ENCODE measurements at regions of chr6 and their contacts with region 1.

Region 1: DNA sequence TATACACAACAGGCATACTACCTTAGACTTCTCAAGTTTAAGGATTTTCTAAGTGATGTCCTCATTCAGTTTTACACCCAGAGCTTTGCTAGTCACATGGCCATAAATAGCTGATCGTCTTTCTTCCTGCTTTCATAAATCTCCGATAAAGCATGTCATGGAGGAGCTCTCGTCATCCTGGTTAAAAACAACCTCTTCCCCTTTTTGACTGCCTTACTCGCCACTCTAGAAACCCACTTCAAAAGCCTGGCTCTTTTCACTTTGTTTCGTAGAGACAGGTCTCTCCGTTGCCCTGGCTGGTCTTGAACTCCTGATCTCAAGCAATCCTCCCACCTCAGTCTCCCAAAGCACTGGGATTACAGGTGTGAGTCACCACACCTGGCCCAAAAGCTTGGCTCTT is 67.0 kb upstream of the SMIM29 start:
- DNase-seq: peak in 2 of 9 experiments; percentile 4 to 33
- ATAC-seq: no peak
- H3K4me3 ChIP-seq: no peak overlapping the region
- H3K4me3 Mint-ChIP-seq: peak overlapping the region; percentile 52
- H3K27ac ChIP-seq: no peak overlapping the region
- H3K27ac Mint-ChIP-seq: peak overlapping the region; percentile 61
- H3K4me1 ChIP-seq: peaks cover 10% of the 10 kb centered on the region
- H3K4me1 Mint-ChIP-seq: peaks cover 42% of the 10 kb centered on the region
- H3K27me3 ChIP-seq: no peaks in the 10 kb centered on the region
- H3K27me3 Mint-ChIP-seq: no peaks in the 10 kb centered on the region
- CTCF ChIP-seq: no peak

Region 2: GRCh38 chr6:34331371-34332050 is 15.7 kb after region 1 on chr6:
- CTCF ChIA-PET with region 1: no interaction called
- POLR2A ChIA-PET with region 1: no interaction called
- intact Hi-C with region 1: no loop called
- DNase-seq: no peak
- ATAC-seq: no peak
- H3K4me3 ChIP-seq: no peak overlapping the region
- H3K4me3 Mint-ChIP-seq: no peak overlapping the region
- H3K27ac ChIP-seq: no peak overlapping the region
- H3K27ac Mint-ChIP-seq: no peak overlapping the region
- H3K4me1 ChIP-seq: no peaks in the 10 kb centered on the region
- H3K4me1 Mint-ChIP-seq: peaks cover 7% of the 10 kb centered on the region
- H3K27me3 ChIP-seq: no peaks in the 10 kb centered on the region
- H3K27me3 Mint-ChIP-seq: no peaks in the 10 kb centered on the region
- CTCF ChIP-seq: no peak

Region 3: DNA sequence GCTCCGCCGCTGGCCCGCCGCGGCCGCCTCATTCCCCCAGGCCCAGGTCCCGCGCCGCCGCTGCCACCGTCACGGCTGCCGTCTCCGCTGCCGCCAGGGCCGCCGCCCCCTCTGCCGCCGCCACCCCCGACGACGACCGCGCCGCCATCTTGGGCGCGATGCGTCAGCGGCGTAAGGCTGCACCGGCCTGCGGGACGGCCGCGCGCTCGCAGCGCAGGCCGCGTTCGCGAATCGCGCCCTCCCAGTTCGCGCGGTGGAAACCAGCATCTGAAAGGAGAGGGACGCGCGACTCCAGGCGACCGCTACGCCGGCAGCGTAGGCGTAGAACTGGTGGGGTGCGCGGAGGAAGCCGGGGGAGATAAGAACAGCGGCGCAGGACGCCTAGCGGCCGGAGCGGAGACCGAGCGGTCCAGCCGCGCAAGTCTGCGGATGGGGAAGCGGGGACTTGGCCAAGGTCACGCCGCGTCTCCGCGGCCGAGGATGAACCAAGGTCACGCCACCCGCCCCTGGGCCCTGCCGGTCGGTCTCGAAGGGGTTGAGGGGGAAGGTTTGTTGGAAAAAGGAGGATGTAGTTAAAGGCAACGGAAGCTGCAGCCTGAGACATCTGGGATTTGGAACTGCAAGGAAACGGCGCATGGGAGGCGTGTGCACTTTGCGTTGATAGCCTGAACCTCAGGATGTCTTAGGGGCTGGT is 76.9 kb after region 1 on chr6 and contains the start of gene NUDT3:
- CTCF ChIA-PET with region 1: no interaction called
- POLR2A ChIA-PET with region 1: no interaction called
- intact Hi-C with region 1: loop called in 1 of 2 experiments (anchors 5 kb)
- DNase-seq: peak; percentile 90 to 98 (median 93)
- ATAC-seq: peak; percentile 90
- H3K4me3 ChIP-seq: peak within 1 kb of the TSS; percentile 78 to 96
- H3K4me3 Mint-ChIP-seq: peak within 1 kb of the TSS; percentile 72
- H3K27ac ChIP-seq: peak within 1 kb of the TSS; percentile 71 to 75
- H3K27ac Mint-ChIP-seq: peak within 1 kb of the TSS; percentile 94
- H3K4me1 ChIP-seq: peaks cover 15% of the 10 kb centered on the region
- H3K4me1 Mint-ChIP-seq: peaks cover 26% of the 10 kb centered on the region
- H3K27me3 ChIP-seq: no peaks in the 10 kb centered on the region
- H3K27me3 Mint-ChIP-seq: no peaks in the 10 kb centered on the region
- CTCF ChIP-seq: peak; percentile 77
- total RNA-seq, gene NUDT3: 12.5 to 12.9 TPM

Region 4: GRCh38 chr6:35500782-35501181 is 1185.0 kb after region 1 on chr6:
- CTCF ChIA-PET with region 1: no interaction called
- POLR2A ChIA-PET with region 1: no interaction called
- intact Hi-C with region 1: no loop called
- DNase-seq: no peak
- ATAC-seq: no peak
- H3K4me3 ChIP-seq: no peak overlapping the region
- H3K4me3 Mint-ChIP-seq: no peak overlapping the region
- H3K27ac ChIP-seq: no peak overlapping the region
- H3K27ac Mint-ChIP-seq: no peak overlapping the region
- H3K4me1 ChIP-seq: peaks cover 11% of the 10 kb centered on the region
- H3K4me1 Mint-ChIP-seq: peaks cover 6% of the 10 kb centered on the region
- H3K27me3 ChIP-seq: peaks cover 0 to 12% of the 10 kb centered on the region in 2 experiments
- H3K27me3 Mint-ChIP-seq: peaks cover 24% of the 10 kb centered on the region
- CTCF ChIP-seq: no peak